ENCODE measurements at regions of chr4 and their contacts with region 1.

Region 1: GRCh38 chr4:70687821-70688794 is at the start of gene UTP3:
- DNase-seq: peak; percentile 95
- ATAC-seq: peak; percentile 94
- H3K4me3 Mint-ChIP-seq: peak within 1 kb of the TSS; percentile 97
- H3K27ac Mint-ChIP-seq: peak within 1 kb of the TSS; percentile 92
- H3K4me1 Mint-ChIP-seq: peaks cover 30% of the 10 kb centered on the region
- H3K27me3 Mint-ChIP-seq: no peaks in the 10 kb centered on the region
- total RNA-seq, gene UTP3: 38.7 to 39.2 TPM

Region 2: GRCh38 chr4:70704331-70705145 is 16.4 kb after region 1 on chr4:
- CTCF ChIA-PET with region 1: interaction called, 63 read pairs
- POLR2A ChIA-PET with region 1: interaction called, 34 read pairs
- DNase-seq: peak; percentile 69
- ATAC-seq: peak; percentile 59
- H3K4me3 Mint-ChIP-seq: peak overlapping the region; percentile 91
- H3K27ac Mint-ChIP-seq: peak overlapping the region; percentile 91
- H3K4me1 Mint-ChIP-seq: peaks cover 23% of the 10 kb centered on the region
- H3K27me3 Mint-ChIP-seq: no peaks in the 10 kb centered on the region

Measured in activated CD8-positive, alpha-beta T cell treated with anti-CD3 and anti-CD28 coated beads, Interleukin-2, amount 10 ng/mL, durations not matched to agents 7 days and 5 days (primary cell).